ENCODE measurements at regions of chr2 and their contacts with region 1.

Region 1: DNA sequence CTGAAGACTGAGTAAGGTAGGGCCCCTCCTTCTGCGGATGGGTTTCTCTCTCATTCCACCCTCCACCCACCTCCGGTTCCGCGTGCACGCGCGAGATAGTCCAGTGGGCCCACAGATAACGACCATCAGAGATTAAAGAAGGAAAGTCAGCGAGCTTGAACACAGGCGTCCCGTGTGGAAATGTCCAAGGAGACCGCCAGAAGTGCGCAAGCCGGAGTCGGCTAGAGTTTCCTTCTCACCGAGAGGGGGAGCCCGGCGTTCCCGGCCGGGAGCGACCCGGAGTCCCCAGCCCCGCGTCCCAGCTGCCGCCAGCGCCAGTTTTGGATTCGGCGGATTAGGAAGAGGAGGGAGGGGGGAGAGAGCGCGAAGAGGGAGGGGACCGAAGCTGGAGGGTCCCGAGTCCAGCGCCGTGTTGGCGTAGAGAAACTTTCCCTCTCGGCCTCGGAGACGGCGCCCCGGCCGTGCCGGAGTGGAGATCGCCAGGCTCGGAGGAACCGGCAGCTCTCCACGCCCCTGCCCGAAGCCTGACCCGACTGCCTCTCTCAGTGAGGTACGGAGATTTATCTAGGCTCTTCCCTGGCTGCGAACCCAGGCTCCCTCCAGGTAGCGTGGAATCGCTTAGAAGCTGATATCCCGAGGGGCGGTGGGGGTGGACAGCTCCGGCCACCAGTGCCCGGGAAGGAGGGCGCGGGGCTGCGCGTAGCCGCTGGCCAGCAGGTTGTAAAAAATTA is at the start of gene GULP1:
- DNase-seq: peak; percentile 83
- ATAC-seq: peak; percentile 86 to 88
- total RNA-seq, gene GULP1: 10.8 to 17.4 TPM

Region 2: GRCh38 chr2:186734957-186735734 is 1556.6 kb before region 1 on chr2:
- intact Hi-C with region 1: no loop called
- DNase-seq: no peak
- ATAC-seq: no peak

Region 3: DNA sequence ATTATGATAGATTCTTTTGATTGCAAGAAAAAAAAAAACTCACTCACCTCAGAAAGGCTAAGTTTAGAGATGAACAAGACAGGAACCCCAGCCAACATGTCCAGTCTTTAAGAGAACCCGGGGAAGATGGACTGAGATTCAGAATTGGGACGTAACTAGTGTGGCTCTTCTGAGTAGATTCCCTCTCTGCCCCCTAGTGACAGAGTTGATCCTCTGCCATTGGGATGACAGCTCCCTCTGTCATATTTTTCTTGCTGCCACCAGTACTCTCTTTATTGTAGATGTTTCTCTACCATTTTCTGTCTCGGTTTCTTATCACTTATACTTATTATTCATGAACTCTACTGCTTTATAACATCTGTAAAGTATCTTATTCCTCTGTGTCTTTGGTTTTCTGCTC is 77.6 kb after region 1 on chr2:
- intact Hi-C with region 1: loop called in 1 of 2 experiments (anchors 5 kb)
- DNase-seq: no peak
- ATAC-seq: peak in 1 of 2 donors; percentile 32